ENCODE measurements at regions of chr4 and their contacts with region 1.

Region 1: GRCh38 chr4:55853484-55854046 is at the start of gene EXOC1:
- DNase-seq: peak; percentile 93
- H3K4me3 Mint-ChIP-seq: peak within 1 kb of the TSS; percentile 37
- H3K27ac Mint-ChIP-seq: peak within 1 kb of the TSS; percentile 53
- H3K4me1 Mint-ChIP-seq: peaks cover 27% of the 10 kb centered on the region
- H3K27me3 Mint-ChIP-seq: peaks cover 2% of the 10 kb centered on the region
- total RNA-seq, gene EXOC1: 18.3 and 18.8 TPM in 2 replicates

Region 2: GRCh38 chr4:55887594-55887993 is 34.0 kb after region 1 on chr4:
- intact Hi-C with region 1: no loop called
- DNase-seq: no peak
- H3K4me3 Mint-ChIP-seq: no peak overlapping the region
- H3K27ac Mint-ChIP-seq: no peak overlapping the region
- H3K4me1 Mint-ChIP-seq: peaks cover 9% of the 10 kb centered on the region
- H3K27me3 Mint-ChIP-seq: no peaks in the 10 kb centered on the region

Region 3: DNA sequence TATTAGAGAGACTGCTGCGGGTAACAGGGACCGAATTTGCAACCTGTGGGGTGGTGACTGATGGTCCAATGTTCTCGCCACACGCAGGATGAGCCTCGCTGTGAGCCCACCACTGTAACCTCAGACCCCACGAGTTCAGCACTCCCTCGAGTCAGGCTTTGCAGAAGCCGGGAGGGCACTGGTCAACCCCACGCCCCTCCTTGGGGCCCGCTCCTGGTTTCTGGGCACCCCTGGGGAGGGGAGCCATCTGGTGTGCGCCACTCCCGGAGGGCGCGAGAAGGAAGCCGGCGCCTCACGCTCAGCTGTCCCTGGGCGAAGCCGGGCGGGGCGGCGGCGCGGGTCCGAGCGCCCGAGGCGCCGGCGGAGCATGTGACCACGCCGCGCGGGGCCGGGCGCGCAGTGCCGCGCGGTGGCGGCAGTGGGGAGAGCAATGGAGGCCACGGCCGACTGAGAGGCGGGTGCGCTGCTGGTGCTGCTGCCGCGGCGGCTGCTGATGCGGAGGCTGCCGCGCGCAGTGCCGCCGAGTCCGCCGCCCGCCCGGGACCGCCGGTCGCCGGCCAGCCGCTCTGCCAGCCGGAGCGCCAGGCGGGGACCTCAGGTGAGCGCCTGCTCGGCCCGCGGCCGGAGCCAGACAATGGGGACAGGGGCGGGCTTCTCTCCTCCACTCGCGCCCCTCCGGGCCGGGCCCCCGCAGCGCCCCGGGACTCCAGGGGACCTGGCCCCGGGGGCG is 195.3 kb after region 1 on chr4:
- intact Hi-C with region 1: loop called (anchors 5 kb)
- DNase-seq: peak; percentile 50
- H3K4me3 Mint-ChIP-seq: peak overlapping the region; percentile 77
- H3K27ac Mint-ChIP-seq: no peak overlapping the region
- H3K4me1 Mint-ChIP-seq: peaks cover 13% of the 10 kb centered on the region
- H3K27me3 Mint-ChIP-seq: peaks cover 50% of the 10 kb centered on the region

Region 4: GRCh38 chr4:56387023-56388001 is 533.7 kb after region 1 on chr4 and contains the start of gene AASDH:
- intact Hi-C with region 1: loop called (anchors 1 kb)
- DNase-seq: peak; percentile 93
- H3K4me3 Mint-ChIP-seq: peak within 1 kb of the TSS; percentile 92
- H3K27ac Mint-ChIP-seq: peak within 1 kb of the TSS; percentile 97
- H3K4me1 Mint-ChIP-seq: peaks cover 26% of the 10 kb centered on the region
- H3K27me3 Mint-ChIP-seq: no peaks in the 10 kb centered on the region
- total RNA-seq, gene AASDH: 9.8 and 12.0 TPM in 2 replicates

Region 5: DNA sequence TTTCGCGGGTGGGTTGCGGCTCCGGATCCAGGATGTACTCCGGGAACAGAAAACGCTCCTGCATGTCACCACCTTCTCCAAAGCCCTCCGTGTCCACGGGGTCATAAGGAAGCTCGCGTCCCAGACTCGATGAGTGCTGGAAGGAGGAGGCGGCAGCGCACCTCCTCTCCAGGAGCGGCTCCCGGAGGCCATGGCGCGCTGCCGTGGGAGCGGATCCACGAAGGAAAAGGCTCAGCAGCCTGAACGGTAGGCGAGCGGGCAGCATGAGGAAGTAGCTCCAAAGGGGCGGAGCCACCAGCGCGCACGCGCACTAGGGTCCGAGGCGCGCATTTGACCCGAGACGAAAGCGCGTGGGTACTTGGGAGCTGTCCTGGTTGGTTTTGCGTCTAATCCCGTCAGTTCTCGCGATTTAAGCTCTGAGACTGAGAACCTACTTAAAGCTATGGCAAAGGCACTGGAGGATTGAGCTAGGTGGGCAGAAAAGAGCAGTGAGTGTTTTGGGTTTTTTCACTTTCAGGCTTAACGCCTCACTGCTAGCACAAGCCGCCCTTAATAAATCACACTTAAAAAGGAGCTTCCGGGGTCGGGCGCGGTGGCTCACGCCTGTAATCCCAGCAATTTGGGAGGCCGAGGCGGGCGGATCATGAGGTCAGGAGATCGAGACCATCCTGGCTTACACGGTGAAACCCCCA is 1123.9 kb after region 1 on chr4 and contains the start of gene NOA1:
- intact Hi-C with region 1: loop called (anchors 1 kb)
- DNase-seq: peak; percentile 98
- H3K4me3 Mint-ChIP-seq: peak within 1 kb of the TSS; percentile 100
- H3K27ac Mint-ChIP-seq: peak within 1 kb of the TSS; percentile 100
- H3K4me1 Mint-ChIP-seq: peaks cover 51% of the 10 kb centered on the region
- H3K27me3 Mint-ChIP-seq: no peaks in the 10 kb centered on the region
- total RNA-seq, gene NOA1: 17.7 and 18.3 TPM in 2 replicates